Prostate gland (tissue), 2 donors: ENCODE measurements at regions of chrX and their contacts with region 1.

Region 1: DNA sequence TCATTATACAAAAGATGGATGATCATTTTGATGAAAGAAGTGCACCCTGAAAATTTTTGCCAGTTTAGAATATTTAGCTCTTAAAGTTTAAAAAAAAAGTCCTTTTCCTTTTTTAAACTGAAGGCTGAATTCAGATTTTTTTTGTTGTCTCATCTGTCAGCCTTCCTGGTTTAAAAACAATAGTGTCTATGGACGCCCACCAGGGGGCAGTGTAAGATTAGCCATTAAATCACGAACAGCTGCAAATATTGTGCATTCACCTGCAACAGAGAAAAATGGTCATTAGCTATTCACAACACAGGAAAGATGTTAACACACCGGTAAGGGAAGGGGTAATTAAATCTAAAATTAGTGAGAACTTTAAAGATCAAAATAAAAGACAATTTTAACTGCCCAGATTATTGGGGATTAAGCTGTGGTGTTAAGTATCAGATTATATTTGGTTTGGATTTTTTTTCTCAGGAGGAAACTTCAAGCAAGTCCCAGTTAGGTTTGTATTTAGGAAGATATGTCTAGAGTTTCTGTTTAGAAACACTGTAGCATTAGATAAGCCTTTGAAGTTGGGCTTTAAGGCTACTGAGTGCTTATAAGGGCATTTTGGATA is 4.4 kb upstream of the CXorf38 start:
- DNase-seq: peak; percentile 42
- H3K4me3 ChIP-seq: no peak overlapping the region
- H3K27ac ChIP-seq: no peak overlapping the region
- H3K4me1 ChIP-seq: no peaks in the 10 kb centered on the region
- H3K27me3 ChIP-seq: no peaks in the 10 kb centered on the region
- CTCF ChIP-seq: peak; percentile 43 to 78 (median 73)
- POLR2A ChIP-seq: no peak

Region 2: DNA sequence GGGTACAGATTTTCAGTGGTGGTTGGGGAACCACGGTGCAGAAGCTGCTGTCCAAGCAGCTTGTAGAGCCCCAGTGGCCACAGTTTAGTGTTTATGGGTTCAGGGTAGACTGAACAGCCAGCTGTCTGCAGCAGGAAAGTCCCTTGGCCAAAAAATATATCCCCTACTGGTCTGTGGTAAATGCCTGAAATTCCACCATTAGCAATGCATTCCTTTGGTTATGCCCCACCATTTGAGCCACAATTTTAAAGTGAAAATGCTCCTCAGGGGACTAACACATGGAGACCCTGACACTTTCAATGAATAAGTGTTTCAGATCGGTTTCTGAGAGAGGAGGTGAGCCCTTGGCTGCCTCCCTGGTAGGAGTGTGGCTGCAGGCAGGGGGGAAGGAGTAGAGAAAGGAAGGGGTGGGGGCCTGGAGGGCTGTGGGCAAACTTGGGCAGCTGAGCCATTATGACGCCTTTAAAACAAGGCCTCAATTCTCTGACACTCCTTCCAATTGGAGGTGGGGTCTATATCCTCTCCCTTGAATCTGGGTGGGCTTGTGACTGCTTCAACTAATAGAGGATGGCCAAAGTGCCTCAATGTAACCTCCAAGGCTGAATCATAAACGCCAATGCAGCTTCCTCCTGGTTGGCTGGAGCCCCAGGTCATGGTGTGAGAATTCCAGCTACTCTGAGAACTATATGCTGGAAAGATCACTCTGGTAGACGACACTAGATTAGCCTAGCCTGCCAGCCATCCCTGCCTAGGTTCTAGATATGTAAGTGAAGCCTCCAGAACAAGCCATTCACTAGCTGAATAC is 146.7 kb before region 1 on chrX:
- intact Hi-C with region 1: no loop called
- DNase-seq: no peak
- H3K4me3 ChIP-seq: no peak overlapping the region
- H3K27ac ChIP-seq: no peak overlapping the region
- H3K4me1 ChIP-seq: no peaks in the 10 kb centered on the region
- H3K27me3 ChIP-seq: no peaks in the 10 kb centered on the region
- CTCF ChIP-seq: no peak
- POLR2A ChIP-seq: no peak

Region 3: DNA sequence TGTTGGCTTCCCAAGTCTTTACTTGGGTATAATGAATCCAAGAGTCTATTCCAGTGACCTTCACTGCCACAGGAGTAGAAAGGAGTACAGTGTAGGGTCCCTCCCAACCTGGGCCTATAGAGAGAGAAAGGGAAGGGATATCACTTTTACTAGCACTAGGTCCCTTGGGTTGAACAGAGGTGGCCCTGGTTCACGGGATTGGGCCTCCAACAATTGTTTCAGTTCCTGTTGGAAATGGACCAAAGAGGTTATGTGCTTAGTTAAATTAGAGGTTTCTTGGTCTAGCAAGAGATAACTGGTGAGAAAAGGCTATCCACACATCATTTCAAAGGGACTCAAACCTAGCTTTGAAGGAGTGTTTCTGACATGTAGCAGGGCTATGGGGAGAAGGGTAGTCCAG is 140.7 kb after region 1 on chrX:
- intact Hi-C with region 1: loop called (anchors 2 kb)
- DNase-seq: no peak
- H3K4me3 ChIP-seq: no peak overlapping the region
- H3K27ac ChIP-seq: no peak overlapping the region
- H3K4me1 ChIP-seq: no peaks in the 10 kb centered on the region
- H3K27me3 ChIP-seq: no peaks in the 10 kb centered on the region
- CTCF ChIP-seq: no peak
- POLR2A ChIP-seq: no peak

Region 4: DNA sequence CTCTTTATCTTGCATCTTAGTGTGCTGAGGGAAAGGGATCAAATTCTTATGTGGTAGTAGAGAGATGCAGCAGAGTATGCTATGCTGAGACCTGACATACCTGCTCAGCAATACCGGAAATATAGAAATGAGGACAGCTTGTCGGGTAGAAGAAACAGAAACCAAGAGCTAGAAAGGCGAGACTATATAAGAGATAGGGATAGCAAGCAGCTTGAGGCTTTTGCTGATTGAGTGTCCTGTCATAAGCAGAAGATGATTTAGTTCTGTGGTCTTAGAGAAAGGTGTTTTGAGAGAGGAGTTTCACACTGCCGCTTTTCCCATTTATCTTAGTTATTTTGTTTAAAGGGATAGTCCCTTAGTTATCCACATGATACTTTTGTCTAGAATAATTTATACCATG is 465.2 kb after region 1 on chrX:
- intact Hi-C with region 1: loop called (anchors 5 kb)
- DNase-seq: no peak
- H3K4me3 ChIP-seq: no peak overlapping the region
- H3K27ac ChIP-seq: no peak overlapping the region
- H3K4me1 ChIP-seq: no peaks in the 10 kb centered on the region
- H3K27me3 ChIP-seq: no peaks in the 10 kb centered on the region
- CTCF ChIP-seq: no peak
- POLR2A ChIP-seq: no peak

Region 5: DNA sequence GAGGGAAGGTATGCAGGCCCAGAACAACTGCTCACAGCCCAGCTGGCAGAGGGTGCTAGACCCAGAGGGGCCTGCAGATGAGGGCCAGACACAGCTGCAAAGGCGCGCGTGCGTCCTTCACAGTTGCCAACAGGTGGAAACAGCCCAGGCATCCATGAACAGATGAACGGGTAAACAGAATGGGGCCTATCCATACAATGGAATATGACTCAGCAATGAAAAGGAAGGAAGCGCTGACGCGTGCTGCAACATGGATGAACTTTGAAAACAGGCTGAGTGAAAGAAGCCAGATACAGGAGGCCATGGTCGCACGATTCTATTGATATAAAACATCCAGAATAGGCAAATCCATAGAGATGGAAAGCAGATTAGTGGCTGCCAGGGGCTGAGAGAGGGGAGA is 599.1 kb after region 1 on chrX:
- intact Hi-C with region 1: loop called (anchors 5 kb)
- DNase-seq: no peak
- H3K4me3 ChIP-seq: no peak overlapping the region
- H3K27ac ChIP-seq: no peak overlapping the region
- H3K4me1 ChIP-seq: no peaks in the 10 kb centered on the region
- H3K27me3 ChIP-seq: no peaks in the 10 kb centered on the region
- CTCF ChIP-seq: no peak
- POLR2A ChIP-seq: no peak